MCF 10A (cell line): ENCODE measurements at regions of chr7 and their contacts with region 1.

Region 1: GRCh38 chr7:11557627-11558026 is 274.4 kb downstream of the THSD7A start:
- DNase-seq: peak; percentile 79
- H3K4me3 Mint-ChIP-seq: no peak overlapping the region
- H3K27ac Mint-ChIP-seq: no peak overlapping the region
- H3K4me1 Mint-ChIP-seq: no peaks in the 10 kb centered on the region
- H3K27me3 Mint-ChIP-seq: no peaks in the 10 kb centered on the region
- CTCF ChIP-seq: peak; percentile 40

Region 2: DNA sequence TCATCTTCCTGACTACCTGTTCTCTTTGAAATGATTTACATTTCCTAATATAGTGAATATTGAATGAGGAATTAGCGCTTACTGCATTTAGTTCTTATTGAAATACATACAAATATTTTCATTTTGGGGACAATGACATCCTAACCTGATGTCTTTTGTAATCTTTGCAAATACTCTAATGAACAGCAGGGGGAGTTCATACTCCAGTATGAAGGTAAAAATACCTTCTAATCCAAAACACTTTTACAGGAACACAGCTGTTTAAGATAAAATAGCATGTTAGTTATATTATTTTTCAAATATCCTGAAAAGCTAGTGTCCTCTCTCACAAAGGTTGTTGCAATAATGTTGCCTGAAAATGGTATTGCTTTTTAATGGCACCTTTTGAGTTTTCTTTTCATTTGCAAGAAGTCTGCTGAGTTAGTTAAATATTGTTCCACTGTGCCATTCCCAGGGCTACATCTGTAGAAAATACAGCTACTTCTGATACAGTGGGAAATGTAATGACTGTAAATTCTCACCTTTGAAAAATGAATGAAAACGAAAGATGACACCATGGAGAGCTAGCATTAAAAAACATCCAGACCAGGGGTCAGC is 184.0 kb before region 1 on chr7:
- CTCF ChIA-PET with region 1: no interaction called
- POLR2A ChIA-PET with region 1: no interaction called
- intact Hi-C with region 1: loop called (anchors 1 kb)
- DNase-seq: peak; percentile 33
- H3K4me3 Mint-ChIP-seq: no peak overlapping the region
- H3K27ac Mint-ChIP-seq: no peak overlapping the region
- H3K4me1 Mint-ChIP-seq: no peaks in the 10 kb centered on the region
- H3K27me3 Mint-ChIP-seq: peaks cover 39% of the 10 kb centered on the region
- CTCF ChIP-seq: peak; percentile 45

Region 3: GRCh38 chr7:11427686-11428273 is 129.8 kb before region 1 on chr7:
- CTCF ChIA-PET with region 1: interaction called, 3 read pairs
- POLR2A ChIA-PET with region 1: no interaction called
- intact Hi-C with region 1: loop called (anchors 1 kb)
- DNase-seq: peak; percentile 67
- H3K4me3 Mint-ChIP-seq: no peak overlapping the region
- H3K27ac Mint-ChIP-seq: no peak overlapping the region
- H3K4me1 Mint-ChIP-seq: no peaks in the 10 kb centered on the region
- H3K27me3 Mint-ChIP-seq: no peaks in the 10 kb centered on the region
- CTCF ChIP-seq: peak; percentile 59

Region 4: DNA sequence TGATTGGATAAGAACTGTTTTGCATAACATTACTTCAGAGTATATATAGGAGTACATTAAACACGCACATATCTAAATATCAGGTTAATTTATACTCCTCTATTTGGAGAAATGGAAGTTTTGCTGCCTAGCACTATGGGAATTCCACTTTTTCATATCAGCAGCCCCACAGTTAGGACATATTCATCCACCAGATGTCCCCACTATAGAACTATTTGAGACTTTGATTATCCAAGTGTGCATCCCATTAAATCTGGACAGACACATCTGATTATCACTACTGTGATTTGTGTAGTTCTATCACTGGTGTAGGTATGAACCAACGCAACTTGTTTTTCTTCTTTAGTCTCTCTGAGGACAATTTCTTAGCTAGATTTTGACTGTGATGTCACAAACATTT is 71.4 kb before region 1 on chr7:
- CTCF ChIA-PET with region 1: no interaction called
- POLR2A ChIA-PET with region 1: no interaction called
- intact Hi-C with region 1: loop called (anchors 1 kb)
- DNase-seq: no peak
- H3K4me3 Mint-ChIP-seq: no peak overlapping the region
- H3K27ac Mint-ChIP-seq: no peak overlapping the region
- H3K4me1 Mint-ChIP-seq: no peaks in the 10 kb centered on the region
- H3K27me3 Mint-ChIP-seq: no peaks in the 10 kb centered on the region
- CTCF ChIP-seq: no peak